ENCODE measurements at regions of chr20 and their contacts with region 1.

Region 1: DNA sequence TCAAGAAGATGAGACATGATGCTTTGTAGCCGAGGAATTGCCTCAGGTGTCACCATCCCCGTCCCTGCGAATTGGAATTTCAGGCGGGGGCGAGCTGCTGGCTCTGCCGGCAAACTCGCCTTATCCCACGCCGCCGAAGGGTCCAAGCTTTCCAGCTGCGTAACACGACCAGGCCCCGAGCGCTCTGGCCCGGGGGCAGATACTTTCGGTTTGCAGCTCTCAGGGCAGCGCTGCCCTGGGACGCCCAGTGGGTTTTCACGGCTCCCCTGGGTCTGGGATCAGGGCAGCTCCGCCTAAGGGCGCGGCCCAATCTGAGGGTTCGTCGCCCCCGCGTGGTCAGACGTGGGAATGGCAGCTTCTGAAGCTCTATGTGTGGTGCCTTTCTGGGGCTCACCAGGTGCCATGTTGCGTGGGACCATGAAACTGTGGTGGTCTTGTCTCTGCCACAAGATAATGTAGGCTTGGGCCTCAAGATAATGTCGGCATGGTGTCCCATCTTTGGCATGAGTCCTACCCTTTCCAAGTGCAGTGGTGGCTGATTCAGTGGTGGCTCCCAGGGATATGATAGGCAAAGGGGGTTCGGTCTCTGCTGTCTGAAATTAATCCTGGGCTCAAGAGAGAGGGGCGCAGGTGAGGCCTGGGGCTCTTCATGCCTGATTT is 20.9 kb downstream of the PIGT start:
- DNase-seq: peak; percentile 90 to 93
- H3K4me3 ChIP-seq: peak overlapping the region in 2 of 3 donors; percentile 38 to 43
- H3K27ac ChIP-seq: peak overlapping the region; percentile 58 to 74 (median 64)
- H3K4me1 ChIP-seq: peaks cover 5 to 6% of the 10 kb centered on the region in 2 donors
- H3K27me3 ChIP-seq: no peaks in the 10 kb centered on the region
- CTCF ChIP-seq: peak; percentile 90 to 98 (median 94)
- POLR2A ChIP-seq: peak in 1 of 2 donors; percentile 52

Region 2: GRCh38 chr20:45318948-45319347 is 117.9 kb before region 1 on chr20:
- intact Hi-C with region 1: loop called (anchors 5 kb)
- DNase-seq: no peak
- H3K4me3 ChIP-seq: no peak overlapping the region
- H3K27ac ChIP-seq: no peak overlapping the region
- H3K4me1 ChIP-seq: no peaks in the 10 kb centered on the region
- H3K27me3 ChIP-seq: no peaks in the 10 kb centered on the region
- CTCF ChIP-seq: no peak
- POLR2A ChIP-seq: no peak

Region 3: GRCh38 chr20:45373353-45374100 is 63.3 kb before region 1 on chr20:
- intact Hi-C with region 1: loop called (anchors 5 kb)
- DNase-seq: peak; percentile 82 to 89
- H3K4me3 ChIP-seq: peak overlapping the region in 2 of 3 donors; percentile 9 to 10
- H3K27ac ChIP-seq: no peak overlapping the region
- H3K4me1 ChIP-seq: peaks cover 14 to 28% of the 10 kb centered on the region in 2 donors
- H3K27me3 ChIP-seq: no peaks in the 10 kb centered on the region
- CTCF ChIP-seq: peak; percentile 54 to 87 (median 79)
- POLR2A ChIP-seq: no peak

Measured in thyroid gland (tissue), 4 donors.